ENCODE measurements at regions of chr11 and their contacts with region 1.

Region 1: GRCh38 chr11:96317985-96318384 is 25.0 kb downstream of the MAML2 start:
- DNase-seq: no peak
- ATAC-seq: no peak
- H3K4me3 Mint-ChIP-seq: no peak overlapping the region
- H3K27ac Mint-ChIP-seq: no peak overlapping the region
- H3K4me1 Mint-ChIP-seq: peaks cover 36% of the 10 kb centered on the region
- H3K27me3 Mint-ChIP-seq: no peaks in the 10 kb centered on the region
- CTCF ChIP-seq: no peak

Region 2: DNA sequence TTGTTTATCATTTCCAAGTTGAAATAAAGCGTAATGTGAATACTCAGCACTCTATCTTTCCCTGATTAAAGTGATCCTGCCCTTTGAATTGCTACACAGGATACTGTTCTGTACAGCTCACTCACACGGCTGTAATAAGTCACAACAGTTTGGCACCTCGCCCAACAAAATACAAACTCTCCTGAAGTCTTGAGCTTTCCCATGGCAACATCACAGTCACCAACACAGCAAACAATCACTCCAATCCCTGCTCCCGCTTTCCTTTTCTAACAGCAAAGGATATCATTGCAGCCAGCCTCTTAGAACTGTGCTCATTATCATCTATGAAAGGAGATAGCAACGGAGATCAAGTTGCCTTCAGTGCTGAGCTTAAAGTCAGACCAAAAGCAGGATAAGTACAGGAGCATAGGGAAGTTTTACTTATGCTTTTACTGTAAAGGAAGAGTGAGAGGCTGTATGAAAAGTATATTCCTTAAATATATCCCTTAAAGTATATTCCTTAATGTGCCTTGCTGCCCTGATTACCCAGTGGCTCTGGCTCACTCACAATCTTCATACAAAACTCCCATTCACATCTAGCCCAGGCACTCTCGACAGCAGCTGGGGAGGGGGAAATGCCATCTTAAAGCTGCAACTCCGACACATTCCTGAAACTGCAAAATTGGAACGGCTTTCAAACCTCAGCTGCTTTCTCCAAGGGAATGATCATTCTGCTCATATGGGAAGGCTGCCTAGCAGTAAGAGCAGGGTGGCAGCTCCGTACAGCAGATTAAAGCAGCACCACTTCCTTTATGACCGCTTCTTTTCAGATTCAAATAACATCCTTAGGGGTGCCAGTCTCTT is 10.8 kb before region 1 on chr11:
- CTCF ChIA-PET with region 1: no interaction called
- POLR2A ChIA-PET with region 1: no interaction called
- intact Hi-C with region 1: loop called (anchors 2 kb)
- DNase-seq: no peak
- ATAC-seq: no peak
- H3K4me3 Mint-ChIP-seq: no peak overlapping the region
- H3K27ac Mint-ChIP-seq: peak overlapping the region; percentile 2
- H3K4me1 Mint-ChIP-seq: peaks cover 56% of the 10 kb centered on the region
- H3K27me3 Mint-ChIP-seq: no peaks in the 10 kb centered on the region
- CTCF ChIP-seq: no peak

Measured in activated B cell treated with CpG ODN at 0.5 μM for 24 hours (primary cell).